Heart left ventricle (tissue), 16 donors: ENCODE measurements at regions of chr2 and their contacts with region 1.

Region 1: GRCh38 chr2:55718165-55719008 is 24.7 kb upstream of the PNPT1 start:
- DNase-seq: peak in 3 of 5 donors; percentile 34 to 45 (median 39)
- ATAC-seq: peak in 2 of 4 donors; percentile 38 to 56
- H3K4me3 ChIP-seq: no peak overlapping the region
- H3K27ac ChIP-seq: no peak overlapping the region
- H3K4me1 ChIP-seq: no peaks in the 10 kb centered on the region
- H3K27me3 ChIP-seq: no peaks in the 10 kb centered on the region
- CTCF ChIP-seq: peak; percentile 60 to 89 (median 78)
- POLR2A ChIP-seq: no peak

Region 2: DNA sequence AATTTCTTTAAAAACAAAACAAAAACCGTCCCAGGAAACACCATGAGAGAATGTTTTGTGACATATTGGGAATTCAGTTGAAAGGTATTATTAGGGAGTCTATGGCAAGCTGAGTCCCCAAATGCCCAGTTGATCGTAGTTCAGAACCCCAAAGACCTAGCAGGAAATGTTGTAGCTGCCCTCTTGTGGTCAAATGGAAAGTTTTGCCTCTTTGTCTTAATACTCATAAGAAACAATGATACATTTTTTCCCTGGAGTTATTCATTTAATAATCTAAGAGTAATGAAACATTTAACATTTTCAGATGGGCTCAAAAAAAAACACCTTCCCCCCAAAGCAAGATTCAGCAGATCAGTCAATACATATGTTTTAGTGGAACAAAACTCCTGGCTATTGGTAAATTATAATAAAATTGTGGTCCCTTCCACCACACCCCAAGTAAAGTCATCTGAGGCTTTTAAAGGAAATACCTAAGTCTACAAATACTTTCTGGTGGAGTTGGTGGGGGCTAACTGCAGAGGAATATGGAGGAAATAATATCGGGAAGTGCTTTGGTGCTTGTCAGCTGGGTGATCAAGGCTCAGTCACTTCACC is 243.0 kb after region 1 on chr2:
- intact Hi-C with region 1: loop called in 2 of 10 experiments (anchors 5 kb)
- DNase-seq: no peak
- ATAC-seq: peak in 2 of 4 donors; percentile 46 to 53
- H3K4me3 ChIP-seq: no peak overlapping the region
- H3K27ac ChIP-seq: no peak overlapping the region
- H3K4me1 ChIP-seq: peaks cover 0 to 10% (median 0%) of the 10 kb centered on the region in 12 donors
- H3K27me3 ChIP-seq: no peaks in the 10 kb centered on the region
- CTCF ChIP-seq: peak; percentile 40 to 67 (median 50)
- POLR2A ChIP-seq: no peak

Region 3: GRCh38 chr2:56009758-56010458 is 291.5 kb after region 1 on chr2:
- intact Hi-C with region 1: loop called (anchors 2 to 5 kb)
- DNase-seq: no peak
- ATAC-seq: peak in 2 of 4 donors; percentile 41 to 58
- H3K4me3 ChIP-seq: no peak overlapping the region
- H3K27ac ChIP-seq: peak overlapping the region in 2 of 12 donors; percentile 1 to 46
- H3K4me1 ChIP-seq: peaks cover 0 to 22% (median 3%) of the 10 kb centered on the region in 12 donors
- H3K27me3 ChIP-seq: peaks cover 0 to 6% (median 0%) of the 10 kb centered on the region in 9 donors
- CTCF ChIP-seq: peak; percentile 25 to 69 (median 57)
- POLR2A ChIP-seq: no peak

Region 4: DNA sequence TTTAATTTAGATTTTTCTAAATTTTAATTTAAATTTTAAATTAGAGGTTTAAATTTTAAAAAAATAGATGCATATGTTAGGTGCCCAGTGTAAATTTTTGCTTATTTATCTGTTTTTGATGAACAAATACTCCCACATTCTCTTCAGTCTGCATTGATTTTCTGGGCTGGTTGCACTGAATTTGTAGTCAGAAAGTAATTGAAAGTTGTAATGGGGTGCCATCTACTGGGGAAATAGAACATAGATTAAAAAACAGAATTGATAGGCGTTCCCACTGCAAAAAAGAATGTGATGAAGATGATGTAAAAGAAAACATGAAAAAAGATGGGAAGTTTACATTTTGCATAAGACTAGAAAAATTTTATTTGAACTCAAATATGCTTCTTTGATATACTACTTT is 413.8 kb after region 1 on chr2:
- intact Hi-C with region 1: loop called in 9 of 10 experiments (anchors 2 to 5 kb)
- DNase-seq: no peak
- ATAC-seq: no peak
- H3K4me3 ChIP-seq: no peak overlapping the region
- H3K27ac ChIP-seq: no peak overlapping the region
- H3K4me1 ChIP-seq: no peaks in the 10 kb centered on the region
- H3K27me3 ChIP-seq: no peaks in the 10 kb centered on the region
- CTCF ChIP-seq: peak; percentile 15 to 64 (median 46)
- POLR2A ChIP-seq: no peak

Region 5: DNA sequence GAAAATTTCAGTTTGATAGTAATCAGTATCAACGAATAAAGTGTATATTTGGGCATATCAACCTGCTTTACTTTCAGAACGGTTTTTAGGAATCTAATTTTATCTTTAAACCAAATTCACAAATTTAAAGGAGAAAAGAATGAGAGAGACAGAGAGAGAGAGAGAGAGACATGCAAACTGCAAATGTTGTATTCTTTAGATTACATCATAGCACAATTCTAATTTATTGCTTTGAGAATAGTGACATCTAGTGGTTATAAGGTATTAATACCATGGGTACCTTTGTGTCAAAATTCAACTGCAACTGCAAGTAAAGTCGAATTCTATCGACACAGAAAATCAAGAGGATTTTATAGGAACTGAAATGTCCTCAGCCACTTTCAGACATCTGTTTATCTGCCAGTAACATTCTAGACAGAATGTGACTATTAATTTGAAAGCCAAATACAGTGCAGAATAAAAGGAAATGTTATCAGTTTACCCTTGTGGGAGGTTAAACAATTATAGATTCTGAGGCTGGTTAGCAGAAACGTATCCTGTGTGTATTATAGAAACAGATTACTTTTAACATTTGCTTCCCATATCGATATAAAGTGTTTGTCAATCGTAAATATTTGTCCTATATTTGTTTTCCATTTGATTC is 1798.4 kb after region 1 on chr2:
- intact Hi-C with region 1: loop called in 5 of 10 experiments (anchors 5 to 10 kb)
- DNase-seq: no peak
- ATAC-seq: peak in 1 of 4 donors; percentile 44
- H3K4me3 ChIP-seq: no peak overlapping the region
- H3K27ac ChIP-seq: no peak overlapping the region
- H3K4me1 ChIP-seq: no peaks in the 10 kb centered on the region
- H3K27me3 ChIP-seq: no peaks in the 10 kb centered on the region
- CTCF ChIP-seq: peak; percentile 55 to 75 (median 64)
- POLR2A ChIP-seq: no peak